ENCODE measurements at regions of chr16 and their contacts with region 1.

Region 1: DNA sequence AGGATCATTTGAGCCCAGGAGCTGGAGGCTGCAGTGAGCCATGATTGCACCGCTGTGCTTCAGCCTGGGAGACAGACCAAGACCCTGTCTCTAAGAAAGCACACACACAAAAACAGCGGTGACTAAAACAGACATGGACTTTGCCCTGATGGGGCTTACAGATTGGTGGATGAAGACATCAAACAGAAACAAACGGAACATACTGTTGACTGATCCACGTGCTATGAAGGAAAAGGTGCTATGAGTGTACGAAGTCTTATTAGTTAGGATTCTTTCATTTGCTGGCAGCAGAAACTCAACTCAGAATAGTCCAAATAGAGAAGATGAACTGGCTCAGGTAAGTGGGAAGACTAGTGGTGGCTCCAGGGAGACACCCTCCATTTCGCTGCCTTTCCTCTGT is 309.8 kb upstream of the N4BP1 start:
- DNase-seq: no peak
- H3K4me3 ChIP-seq: no peak overlapping the region
- H3K27ac ChIP-seq: no peak overlapping the region
- H3K4me1 ChIP-seq: no peaks in the 10 kb centered on the region
- H3K27me3 ChIP-seq: peaks cover 0 to 4% (median 0%) of the 10 kb centered on the region in 4 donors
- CTCF ChIP-seq: no peak
- EP300 ChIP-seq: no peak
- POLR2A ChIP-seq: no peak

Region 2: DNA sequence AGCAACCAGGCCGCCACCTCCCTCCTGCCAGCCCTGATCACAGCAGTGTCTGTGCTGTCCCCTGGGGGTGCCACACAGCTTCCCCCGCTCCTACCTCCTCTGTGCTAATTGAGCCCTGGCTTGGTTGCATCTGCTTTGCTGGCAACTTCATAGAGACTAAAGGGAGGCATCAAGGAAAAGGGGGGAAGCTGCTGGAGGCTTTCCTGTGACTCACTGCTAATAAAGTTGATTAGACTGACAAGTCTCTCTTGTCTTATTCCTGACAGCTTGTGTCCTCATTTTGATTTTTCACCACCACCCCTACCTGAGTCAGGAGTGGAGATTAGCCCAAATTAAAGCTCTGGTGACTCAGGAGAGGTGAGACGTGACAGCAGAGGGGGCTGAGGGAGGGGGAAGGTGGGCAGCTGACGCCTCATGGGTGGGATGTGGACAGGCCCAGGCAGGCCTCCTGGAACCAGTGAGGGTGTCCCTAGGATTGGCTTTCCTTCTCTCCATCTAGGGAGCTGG is 51.8 kb after region 1 on chr16:
- intact Hi-C with region 1: loop called (anchors 10 kb)
- DNase-seq: no peak
- H3K4me3 ChIP-seq: no peak overlapping the region
- H3K27ac ChIP-seq: no peak overlapping the region
- H3K4me1 ChIP-seq: no peaks in the 10 kb centered on the region
- H3K27me3 ChIP-seq: no peaks in the 10 kb centered on the region
- CTCF ChIP-seq: no peak
- EP300 ChIP-seq: no peak
- POLR2A ChIP-seq: no peak

Region 3: GRCh38 chr16:49652456-49653172 is 732.8 kb after region 1 on chr16:
- intact Hi-C with region 1: no loop called
- DNase-seq: no peak
- H3K4me3 ChIP-seq: peak overlapping the region in 2 of 4 donors; percentile 8 to 13
- H3K27ac ChIP-seq: peak overlapping the region in 3 of 4 donors; percentile 45 to 68 (median 66)
- H3K4me1 ChIP-seq: peaks cover 0 to 8% (median 3%) of the 10 kb centered on the region in 4 donors
- H3K27me3 ChIP-seq: no peaks in the 10 kb centered on the region
- CTCF ChIP-seq: no peak
- EP300 ChIP-seq: no peak
- POLR2A ChIP-seq: no peak

Measured in esophagus muscularis mucosa (tissue), 4 donors.